A673 (cell line): ENCODE measurements at regions of chr15 and their contacts with region 1.

Region 1: DNA sequence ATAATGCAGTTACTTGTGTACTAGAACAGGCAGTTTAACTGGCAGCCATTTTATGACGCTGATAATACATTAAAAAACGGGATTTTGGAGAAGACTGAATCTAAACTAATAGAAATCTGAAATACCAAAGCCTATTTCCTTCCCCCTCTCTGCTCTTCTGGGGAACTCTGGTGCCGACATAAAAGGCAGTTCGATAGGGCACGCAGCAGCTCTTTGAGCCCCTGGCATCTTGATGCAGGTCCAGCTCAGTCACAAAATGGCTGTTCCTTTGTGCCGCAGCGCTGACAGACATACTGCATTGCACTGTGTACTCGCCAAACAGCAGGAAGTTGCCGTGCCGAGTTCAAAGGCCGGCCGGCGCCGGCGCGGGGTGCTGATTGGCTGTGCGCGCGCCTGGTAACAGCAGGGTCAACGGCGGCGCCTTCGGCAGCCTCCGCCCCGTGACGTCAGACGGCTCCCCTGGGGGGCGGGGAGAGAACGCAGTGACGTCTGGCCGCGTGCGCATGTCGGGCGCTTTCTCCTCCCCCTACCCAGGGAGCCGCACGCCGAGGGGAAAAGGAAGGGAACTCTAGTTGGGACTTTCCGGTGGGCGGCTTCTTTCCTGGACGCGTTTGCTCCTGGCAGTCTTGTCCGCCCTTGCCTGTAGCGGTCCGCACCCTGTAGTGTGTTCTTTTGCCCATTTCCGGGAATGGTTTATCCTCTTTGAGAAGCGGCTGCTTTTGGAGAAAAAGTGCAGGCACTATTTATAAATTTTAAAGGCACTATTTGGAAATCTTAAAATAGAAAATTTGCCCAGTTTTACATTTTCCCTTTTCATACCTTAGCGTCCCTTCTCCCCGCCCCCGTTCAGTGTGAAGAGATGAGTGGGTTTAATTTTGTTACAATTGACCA is 4.1 kb downstream of the CHD2 start:
- DNase-seq: peak; percentile 99
- H3K4me3 ChIP-seq: peak overlapping the region; percentile 68
- H3K27ac ChIP-seq: peak overlapping the region; percentile 99
- H3K4me1 ChIP-seq: peaks cover 40% of the 10 kb centered on the region
- H3K27me3 ChIP-seq: no peaks in the 10 kb centered on the region
- CTCF ChIP-seq: no peak

Region 2: DNA sequence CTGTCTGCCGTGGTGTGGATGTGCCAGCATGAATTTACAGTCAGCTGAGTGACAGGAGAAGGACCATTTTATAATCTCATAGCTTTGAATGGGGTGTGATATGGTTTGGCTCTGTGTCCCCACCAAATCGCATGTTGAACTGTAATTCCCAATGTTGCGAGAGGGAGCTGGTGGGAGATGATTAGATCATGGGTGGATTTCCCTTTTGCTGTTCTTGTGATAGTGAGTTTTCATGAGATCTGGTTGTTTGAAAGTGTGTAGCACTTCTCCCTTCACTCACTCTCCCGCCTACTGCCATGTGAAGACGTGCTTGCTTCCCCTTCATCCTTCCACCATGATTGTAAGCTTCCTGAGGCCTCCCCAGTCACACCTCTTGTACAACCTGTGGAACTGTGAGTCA is 116.0 kb before region 1 on chr15:
- CTCF ChIA-PET with region 1: no interaction called
- POLR2A ChIA-PET with region 1: no interaction called
- intact Hi-C with region 1: no loop called
- DNase-seq: no peak
- H3K4me3 ChIP-seq: no peak overlapping the region
- H3K27ac ChIP-seq: no peak overlapping the region
- H3K4me1 ChIP-seq: no peaks in the 10 kb centered on the region
- H3K27me3 ChIP-seq: no peaks in the 10 kb centered on the region
- CTCF ChIP-seq: no peak

Region 3: DNA sequence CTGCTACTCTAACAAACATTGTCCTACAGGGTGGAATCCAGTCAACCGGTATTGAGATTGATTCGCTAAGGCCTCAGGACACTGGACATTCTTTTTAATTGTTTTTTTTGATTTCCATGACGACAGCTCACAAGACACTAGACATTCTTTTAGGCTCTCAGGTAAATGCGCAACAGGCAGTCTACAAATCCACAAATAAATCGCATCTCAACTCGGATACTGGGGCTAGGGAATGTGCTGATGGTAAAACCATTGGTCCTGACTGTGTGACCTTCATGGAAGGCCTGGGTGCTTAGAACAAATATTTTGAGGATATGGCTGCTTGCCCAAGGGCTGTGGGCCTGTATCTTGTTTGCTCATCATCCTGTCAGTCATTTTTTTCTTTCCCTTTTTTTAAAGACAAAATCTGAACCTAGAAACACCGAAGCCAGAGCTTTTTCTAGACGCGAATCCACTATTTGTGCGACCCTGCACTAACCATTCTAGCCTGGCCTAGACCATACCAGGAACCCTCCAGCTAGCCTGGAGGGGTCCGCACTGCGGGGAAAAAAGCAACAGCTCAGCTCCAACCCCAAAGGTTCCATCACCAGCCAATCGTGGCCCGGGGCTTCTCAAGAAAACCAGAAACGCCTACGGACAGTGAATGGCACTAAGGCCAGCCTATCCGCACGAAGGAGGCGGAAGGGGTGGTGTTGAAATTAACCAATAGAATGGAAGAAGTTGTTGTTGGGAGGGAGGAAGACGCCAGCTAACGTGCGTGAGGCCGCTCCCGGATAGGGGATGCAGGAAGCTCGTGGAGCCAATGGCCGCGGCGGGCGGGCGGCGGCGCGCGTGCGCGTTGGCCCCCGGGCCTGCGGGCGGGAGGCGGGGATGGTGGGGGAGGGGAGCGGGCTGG is 22.1 kb before region 1 on chr15:
- CTCF ChIA-PET with region 1: interaction called, 6 read pairs
- POLR2A ChIA-PET with region 1: interaction called, 19 read pairs
- intact Hi-C with region 1: loop called (anchors 2 kb)
- DNase-seq: peak; percentile 100
- H3K4me3 ChIP-seq: peak overlapping the region; percentile 91
- H3K27ac ChIP-seq: peak overlapping the region; percentile 85
- H3K4me1 ChIP-seq: peaks cover 20% of the 10 kb centered on the region
- H3K27me3 ChIP-seq: no peaks in the 10 kb centered on the region
- CTCF ChIP-seq: no peak